OCI-LY7 (cell line): ENCODE measurements at regions of chr19 and their contacts with region 1.

Region 1: DNA sequence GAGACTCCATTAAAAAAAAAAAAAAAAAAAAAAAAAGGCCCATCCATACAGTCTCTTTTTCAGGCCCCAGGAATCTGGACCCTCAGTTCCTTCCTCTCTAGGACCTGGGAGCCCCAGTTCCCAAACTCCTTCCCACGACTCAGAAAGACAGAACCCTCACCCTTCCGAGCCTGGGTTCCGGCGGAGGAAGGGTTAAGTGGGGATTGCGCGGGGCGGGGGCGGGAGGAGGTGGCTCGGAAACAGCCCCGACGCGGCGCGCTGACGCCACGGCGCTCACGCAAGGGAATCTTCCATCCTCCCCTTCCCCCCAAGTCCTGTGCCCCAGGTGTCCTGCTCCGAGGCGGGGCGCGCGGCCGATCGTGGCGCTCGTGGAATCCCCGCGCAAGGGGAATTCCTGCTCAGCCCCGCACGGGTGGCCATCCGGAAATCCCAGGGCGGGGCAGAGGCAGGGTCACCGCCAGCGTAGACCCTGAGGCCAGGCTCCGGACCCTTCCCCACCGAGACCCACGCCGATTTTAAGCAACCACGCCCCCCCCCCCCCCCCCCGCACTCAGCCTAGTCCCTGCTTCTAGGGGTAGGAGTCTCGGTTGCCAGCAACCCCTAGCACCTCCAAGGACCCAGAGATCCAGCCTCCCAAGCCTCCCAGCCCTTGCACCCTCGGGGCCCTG is 659 bp downstream of the NFKBID start:
- DNase-seq: peak; percentile 94
- H3K4me3 ChIP-seq: peak overlapping the region; percentile 77
- H3K27ac ChIP-seq: peak overlapping the region; percentile 87
- H3K4me1 ChIP-seq: peaks cover 50% of the 10 kb centered on the region
- CTCF ChIP-seq: no peak

Region 2: GRCh38 chr19:35648017-35648961 is 251.4 kb before region 1 on chr19 and contains the start of gene COX6B1:
- CTCF ChIA-PET with region 1: no interaction called
- POLR2A ChIA-PET with region 1: no interaction called
- intact Hi-C with region 1: loop called (anchors 1 kb)
- DNase-seq: peak; percentile 99
- H3K4me3 ChIP-seq: peak within 1 kb of the TSS; percentile 89
- H3K27ac ChIP-seq: peak within 1 kb of the TSS; percentile 44
- H3K4me1 ChIP-seq: peaks cover 36% of the 10 kb centered on the region
- CTCF ChIP-seq: no peak
- total RNA-seq, gene COX6B1: 404 and 536 TPM in 2 replicates

Region 3: GRCh38 chr19:35740423-35741202 is 159.1 kb before region 1 on chr19:
- CTCF ChIA-PET with region 1: no interaction called
- POLR2A ChIA-PET with region 1: no interaction called
- intact Hi-C with region 1: loop called (anchors 5 kb)
- DNase-seq: peak; percentile 97
- H3K4me3 ChIP-seq: peak overlapping the region; percentile 69
- H3K27ac ChIP-seq: peak overlapping the region; percentile 86
- H3K4me1 ChIP-seq: peaks cover 52% of the 10 kb centered on the region
- CTCF ChIP-seq: peak; percentile 61

Region 4: DNA sequence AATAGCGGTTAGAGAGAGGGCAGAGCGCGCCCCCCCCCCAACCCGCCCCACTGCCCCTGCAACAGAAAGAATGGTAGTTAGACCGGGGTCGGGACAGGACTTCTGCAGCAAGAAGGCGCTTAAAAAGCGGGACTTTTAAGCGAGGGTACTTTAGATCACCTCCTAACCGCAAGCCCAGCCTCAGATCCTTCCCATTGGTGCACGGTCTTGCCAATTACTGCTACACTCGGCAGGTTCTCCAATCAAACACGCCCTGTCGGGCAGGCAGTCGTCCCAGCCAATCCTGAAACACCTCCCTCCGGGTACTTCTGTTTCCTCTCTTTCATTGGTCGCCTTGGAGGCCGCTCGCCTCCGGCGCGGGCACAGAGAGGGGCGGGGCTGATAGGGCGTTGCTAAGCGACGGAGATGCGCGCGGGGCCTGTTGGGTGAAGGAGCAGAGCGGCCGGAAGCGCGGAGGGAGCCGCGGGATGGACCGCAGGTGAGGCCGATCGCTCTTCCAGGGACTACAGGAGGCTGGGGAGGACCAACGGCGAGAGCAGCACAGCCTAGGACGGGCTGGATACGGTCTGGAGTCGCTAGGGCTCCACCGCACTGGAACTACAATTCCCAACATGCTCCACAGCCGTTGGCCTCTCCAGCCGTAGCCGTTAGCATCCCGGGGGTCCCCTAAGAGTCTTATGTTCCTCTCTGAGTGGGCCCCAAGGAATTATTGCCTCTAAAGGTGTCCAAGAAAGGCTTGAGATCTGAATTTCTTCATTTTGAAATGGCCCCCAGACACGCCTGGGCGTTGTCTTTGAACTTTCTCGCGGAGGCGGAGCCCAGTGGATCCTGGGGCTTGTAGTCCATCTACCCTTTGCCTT is 141.7 kb before region 1 on chr19 and contains the start of gene PROSER3:
- CTCF ChIA-PET with region 1: no interaction called
- POLR2A ChIA-PET with region 1: no interaction called
- intact Hi-C with region 1: loop called (anchors 5 kb)
- DNase-seq: peak; percentile 99
- H3K4me3 ChIP-seq: peak within 1 kb of the TSS; percentile 96
- H3K27ac ChIP-seq: peak within 1 kb of the TSS; percentile 82
- H3K4me1 ChIP-seq: peaks cover 21% of the 10 kb centered on the region
- CTCF ChIP-seq: no peak
- total RNA-seq, gene PROSER3: 15.2 and 17.2 TPM in 2 replicates

Region 5: GRCh38 chr19:35931161-35931873 is 31.6 kb after region 1 on chr19:
- CTCF ChIA-PET with region 1: no interaction called
- POLR2A ChIA-PET with region 1: interaction called, 3 read pairs
- intact Hi-C with region 1: loop called (anchors 1 kb)
- DNase-seq: peak; percentile 100
- H3K4me3 ChIP-seq: peak overlapping the region; percentile 67
- H3K27ac ChIP-seq: peak overlapping the region; percentile 61
- H3K4me1 ChIP-seq: peaks cover 12% of the 10 kb centered on the region
- CTCF ChIP-seq: peak; percentile 95

Region 6: DNA sequence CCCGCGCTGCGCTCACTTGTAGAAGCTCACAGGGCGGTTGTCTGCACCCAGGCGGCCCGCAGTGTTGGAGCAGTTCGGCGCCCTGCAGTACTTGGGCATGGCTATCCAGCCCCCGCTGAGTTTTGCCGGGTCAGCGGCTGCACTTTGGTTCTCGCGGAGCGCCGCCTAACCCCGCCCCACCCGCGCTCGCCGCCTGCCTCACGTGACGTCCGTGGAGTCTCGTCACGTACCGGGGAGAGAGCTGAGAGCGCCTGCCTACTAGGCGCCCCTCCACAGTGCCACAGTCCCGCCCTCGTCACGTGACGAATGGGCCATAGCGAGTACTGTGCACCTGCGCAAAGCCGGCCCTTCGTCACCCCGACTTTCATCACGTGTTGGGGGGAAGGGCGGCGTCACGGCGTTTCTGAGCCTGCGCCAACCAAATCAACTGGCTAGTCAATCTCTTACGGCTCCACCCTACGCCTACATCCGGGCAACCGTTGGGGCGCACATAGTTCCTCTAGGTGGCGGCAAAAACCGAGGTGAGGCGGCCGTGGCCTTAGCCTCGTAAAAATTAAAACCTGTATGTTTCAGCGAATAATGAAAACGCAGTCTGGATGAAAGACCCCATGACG is 154.5 kb after region 1 on chr19 and contains the start of gene THAP8:
- CTCF ChIA-PET with region 1: no interaction called
- POLR2A ChIA-PET with region 1: no interaction called
- intact Hi-C with region 1: loop called (anchors 2 kb)
- DNase-seq: peak; percentile 99
- H3K4me3 ChIP-seq: peak within 1 kb of the TSS; percentile 93
- H3K27ac ChIP-seq: peak within 1 kb of the TSS; percentile 86
- H3K4me1 ChIP-seq: peaks cover 40% of the 10 kb centered on the region
- CTCF ChIP-seq: peak; percentile 65
- total RNA-seq, gene THAP8: 4.9 and 7.3 TPM in 2 replicates